ENCODE measurements at regions of chr2 and their contacts with region 1.

Region 1: GRCh38 chr2:157327621-157328500 is 2.2 kb upstream of the ERMN start:
- DNase-seq: peak; percentile 78 to 97 (median 88)
- ATAC-seq: peak; percentile 93
- H3K4me3 ChIP-seq: no peak overlapping the region
- H3K4me3 Mint-ChIP-seq: peak overlapping the region; percentile 61
- H3K27ac ChIP-seq: no peak overlapping the region
- H3K27ac Mint-ChIP-seq: peak overlapping the region; percentile 83
- H3K4me1 ChIP-seq: peaks cover 37% of the 10 kb centered on the region
- H3K4me1 Mint-ChIP-seq: peaks cover 56% of the 10 kb centered on the region
- H3K27me3 ChIP-seq: no peaks in the 10 kb centered on the region
- H3K27me3 Mint-ChIP-seq: no peaks in the 10 kb centered on the region
- CTCF ChIP-seq: peak; percentile 92

Region 2: DNA sequence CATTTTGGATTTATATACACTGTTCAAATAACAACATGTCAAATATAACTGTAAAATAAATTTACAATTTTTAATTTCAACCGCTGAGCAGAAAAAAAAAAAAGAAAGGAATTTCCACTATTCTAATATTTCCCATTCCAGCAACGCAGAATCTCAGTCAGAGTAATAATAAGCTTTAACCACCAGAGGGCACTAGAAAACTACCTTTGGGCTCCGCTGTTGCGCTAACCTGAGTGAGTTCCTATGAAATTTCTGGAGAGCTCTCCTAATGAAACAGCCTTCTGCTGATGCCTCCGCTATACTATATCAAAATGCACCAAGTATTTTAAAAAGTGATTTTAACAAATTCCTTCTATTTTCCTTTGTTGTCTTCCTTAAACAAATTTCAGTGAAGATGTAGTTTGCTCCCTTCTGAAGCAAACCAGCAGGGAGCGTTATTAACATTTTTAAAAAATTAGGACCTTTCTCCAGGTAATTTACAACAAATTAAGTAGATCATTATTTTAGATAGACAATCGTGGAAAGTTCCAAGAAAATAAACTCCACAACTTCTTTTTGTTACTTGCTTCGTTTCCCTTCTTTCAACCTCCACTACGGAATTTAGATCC is 25.3 kb before region 1 on chr2:
- CTCF ChIA-PET with region 1: interaction called, 15 read pairs
- POLR2A ChIA-PET with region 1: interaction called, 5 read pairs
- intact Hi-C with region 1: no loop called
- DNase-seq: peak in 9 of 14 experiments; percentile 5 to 74 (median 24)
- ATAC-seq: peak; percentile 83
- H3K4me3 ChIP-seq: no peak overlapping the region
- H3K4me3 Mint-ChIP-seq: no peak overlapping the region
- H3K27ac ChIP-seq: no peak overlapping the region
- H3K27ac Mint-ChIP-seq: no peak overlapping the region
- H3K4me1 ChIP-seq: no peaks in the 10 kb centered on the region
- H3K4me1 Mint-ChIP-seq: peaks cover 28% of the 10 kb centered on the region
- H3K27me3 ChIP-seq: no peaks in the 10 kb centered on the region
- H3K27me3 Mint-ChIP-seq: peaks cover 8% of the 10 kb centered on the region
- CTCF ChIP-seq: peak; percentile 98

Region 3: GRCh38 chr2:157413326-157414035 is 85.6 kb after region 1 on chr2:
- CTCF ChIA-PET with region 1: interaction called, 17 read pairs
- POLR2A ChIA-PET with region 1: interaction called, 23 read pairs
- intact Hi-C with region 1: loop called in 1 of 2 experiments (anchors 5 kb)
- DNase-seq: peak in 12 of 14 experiments; percentile 34 to 93 (median 54)
- ATAC-seq: peak; percentile 76
- H3K4me3 ChIP-seq: peak overlapping the region; percentile 6
- H3K4me3 Mint-ChIP-seq: peak overlapping the region; percentile 54
- H3K27ac ChIP-seq: peak overlapping the region; percentile 51 to 79
- H3K27ac Mint-ChIP-seq: peak overlapping the region; percentile 86
- H3K4me1 ChIP-seq: peaks cover 43% of the 10 kb centered on the region
- H3K4me1 Mint-ChIP-seq: peaks cover 92% of the 10 kb centered on the region
- H3K27me3 ChIP-seq: no peaks in the 10 kb centered on the region
- H3K27me3 Mint-ChIP-seq: no peaks in the 10 kb centered on the region
- CTCF ChIP-seq: no peak

Region 4: DNA sequence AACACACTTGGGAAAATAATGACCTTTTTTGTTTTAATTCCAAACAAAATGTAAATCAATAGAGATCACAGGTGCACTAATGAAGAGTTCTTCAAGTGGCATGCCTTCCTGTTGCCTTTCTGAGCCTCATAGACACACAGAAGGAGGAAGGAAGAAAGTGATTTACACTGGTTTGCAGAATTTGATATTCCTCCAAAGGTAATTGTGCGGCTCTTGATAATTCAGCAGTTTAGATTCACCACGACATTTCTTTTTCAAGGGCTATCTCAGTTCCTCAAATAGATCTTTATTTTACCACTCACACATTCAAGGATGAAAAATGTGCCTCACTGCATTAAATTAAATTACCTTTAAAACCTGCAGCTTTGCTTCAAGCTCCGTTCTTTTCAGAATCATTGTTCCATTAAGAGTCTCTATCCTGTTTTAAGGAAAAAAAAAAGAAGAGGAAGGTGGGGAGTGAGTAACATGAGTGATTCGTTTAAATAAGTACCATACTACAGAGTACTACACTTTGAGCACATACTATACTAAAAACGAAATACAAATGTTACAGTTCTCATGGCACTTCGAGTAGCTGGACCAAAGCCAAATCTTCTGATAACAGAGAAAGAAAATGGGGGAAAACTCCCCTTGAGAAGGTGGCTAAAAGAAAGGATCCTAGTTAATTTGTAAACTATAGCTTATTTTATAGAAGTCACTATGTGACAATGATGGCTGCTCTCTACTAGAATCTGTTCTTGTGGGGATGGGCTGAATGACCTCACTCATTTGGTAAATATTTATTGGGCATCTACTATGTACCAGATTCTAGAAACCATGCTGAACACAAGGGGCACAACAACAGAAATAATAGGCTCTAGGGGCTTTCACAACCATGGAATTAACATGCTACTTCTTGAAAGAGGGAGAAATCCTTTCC is 99.4 kb after region 1 on chr2:
- CTCF ChIA-PET with region 1: interaction called, 13 read pairs
- POLR2A ChIA-PET with region 1: interaction called, 26 read pairs
- intact Hi-C with region 1: loop called in 1 of 2 experiments (anchors 10 kb)
- DNase-seq: no peak
- ATAC-seq: peak; percentile 3
- H3K4me3 ChIP-seq: no peak overlapping the region
- H3K4me3 Mint-ChIP-seq: peak overlapping the region; percentile 63
- H3K27ac ChIP-seq: peak overlapping the region; percentile 6
- H3K27ac Mint-ChIP-seq: peak overlapping the region; percentile 97
- H3K4me1 ChIP-seq: peaks cover 30% of the 10 kb centered on the region
- H3K4me1 Mint-ChIP-seq: peaks cover 85% of the 10 kb centered on the region
- H3K27me3 ChIP-seq: no peaks in the 10 kb centered on the region
- H3K27me3 Mint-ChIP-seq: no peaks in the 10 kb centered on the region
- CTCF ChIP-seq: no peak

Region 5: DNA sequence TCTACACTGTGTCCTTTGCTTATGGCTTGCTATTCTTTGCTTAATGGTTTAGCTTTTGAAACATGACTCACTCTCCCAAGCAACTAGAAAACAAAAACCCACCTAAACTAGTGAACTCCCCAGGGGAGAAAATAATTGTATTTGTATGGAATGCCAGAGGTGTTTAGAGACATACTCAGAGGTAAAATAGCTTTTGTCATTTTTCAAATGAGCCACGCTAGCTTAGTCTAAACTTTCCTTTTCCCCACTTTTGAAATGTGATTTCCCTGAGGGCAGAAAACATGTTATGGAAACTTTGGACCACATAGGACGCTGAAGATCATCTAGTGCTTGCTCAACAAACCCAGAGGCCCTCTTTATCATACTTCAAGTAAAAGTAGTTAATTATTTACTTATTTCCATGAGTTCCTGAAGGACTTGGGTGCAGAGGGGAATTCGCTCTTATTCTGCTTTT is 132.6 kb after region 1 on chr2:
- CTCF ChIA-PET with region 1: interaction called, 19 read pairs
- POLR2A ChIA-PET with region 1: interaction called, 6 read pairs
- intact Hi-C with region 1: loop called in 1 of 2 experiments (anchors 1 kb)
- DNase-seq: no peak
- ATAC-seq: no peak
- H3K4me3 ChIP-seq: no peak overlapping the region
- H3K4me3 Mint-ChIP-seq: no peak overlapping the region
- H3K27ac ChIP-seq: no peak overlapping the region
- H3K27ac Mint-ChIP-seq: peak overlapping the region; percentile 74
- H3K4me1 ChIP-seq: peaks cover 23% of the 10 kb centered on the region
- H3K4me1 Mint-ChIP-seq: peaks cover 86% of the 10 kb centered on the region
- H3K27me3 ChIP-seq: no peaks in the 10 kb centered on the region
- H3K27me3 Mint-ChIP-seq: no peaks in the 10 kb centered on the region
- CTCF ChIP-seq: no peak

Region 6: DNA sequence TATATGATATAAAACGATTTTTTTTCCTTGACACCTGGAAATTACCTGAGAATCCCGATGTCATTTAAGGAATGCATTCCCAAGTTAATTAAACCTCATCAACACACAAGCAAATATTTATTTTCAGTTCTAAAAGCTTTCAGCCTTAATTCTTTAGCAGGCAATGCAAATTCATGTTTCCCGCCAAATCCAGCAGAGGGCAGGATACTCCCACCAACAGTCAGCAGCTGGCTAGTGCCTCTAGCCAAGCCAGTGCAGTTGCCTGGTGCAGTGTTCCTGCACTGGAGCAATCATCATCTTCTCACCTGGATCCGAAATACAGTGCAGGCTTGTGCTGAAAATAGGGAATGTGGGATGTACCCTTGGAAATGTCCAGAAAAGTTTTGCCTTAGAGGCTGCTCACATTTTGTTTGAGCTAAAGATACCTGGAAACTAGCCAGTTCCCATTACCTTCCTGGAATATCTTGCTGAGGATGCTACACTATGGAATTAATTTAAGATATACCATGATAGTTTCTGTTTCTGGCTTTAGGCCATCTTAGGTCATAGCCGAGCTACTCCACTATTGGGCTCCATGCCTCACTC is 164.4 kb after region 1 on chr2:
- CTCF ChIA-PET with region 1: interaction called, 62 read pairs
- POLR2A ChIA-PET with region 1: interaction called, 7 read pairs
- intact Hi-C with region 1: loop called (anchors 2 to 5 kb)
- DNase-seq: peak; percentile 57 to 86 (median 66)
- ATAC-seq: peak; percentile 92
- H3K4me3 ChIP-seq: no peak overlapping the region
- H3K4me3 Mint-ChIP-seq: no peak overlapping the region
- H3K27ac ChIP-seq: no peak overlapping the region
- H3K27ac Mint-ChIP-seq: no peak overlapping the region
- H3K4me1 ChIP-seq: peaks cover 7% of the 10 kb centered on the region
- H3K4me1 Mint-ChIP-seq: peaks cover 47% of the 10 kb centered on the region
- H3K27me3 ChIP-seq: no peaks in the 10 kb centered on the region
- H3K27me3 Mint-ChIP-seq: no peaks in the 10 kb centered on the region
- CTCF ChIP-seq: peak; percentile 83

Region 7: GRCh38 chr2:157596992-157597681 is 269.3 kb after region 1 on chr2:
- CTCF ChIA-PET with region 1: interaction called, 5 read pairs
- POLR2A ChIA-PET with region 1: interaction called, 3 read pairs
- intact Hi-C with region 1: loop called (anchors 1 to 5 kb)
- DNase-seq: peak; percentile 31 to 70 (median 50)
- ATAC-seq: peak; percentile 76
- H3K4me3 ChIP-seq: peak overlapping the region; percentile 45
- H3K4me3 Mint-ChIP-seq: peak overlapping the region; percentile 70
- H3K27ac ChIP-seq: no peak overlapping the region
- H3K27ac Mint-ChIP-seq: no peak overlapping the region
- H3K4me1 ChIP-seq: peaks cover 6% of the 10 kb centered on the region
- H3K4me1 Mint-ChIP-seq: peaks cover 16% of the 10 kb centered on the region
- H3K27me3 ChIP-seq: peaks cover 0 to 5% of the 10 kb centered on the region in 2 experiments
- H3K27me3 Mint-ChIP-seq: no peaks in the 10 kb centered on the region
- CTCF ChIP-seq: peak; percentile 68

Measured in CD4-positive, alpha-beta T cell (primary cell).